ENCODE measurements at regions of chr19 and their contacts with region 1.

Region 1: GRCh38 chr19:35648017-35648961 is at the start of gene COX6B1:
- DNase-seq: peak; percentile 97
- H3K4me3 Mint-ChIP-seq: peak within 1 kb of the TSS; percentile 87
- H3K27ac Mint-ChIP-seq: peak within 1 kb of the TSS; percentile 91
- H3K4me1 Mint-ChIP-seq: peaks cover 40% of the 10 kb centered on the region
- H3K27me3 Mint-ChIP-seq: no peaks in the 10 kb centered on the region
- total RNA-seq, gene COX6B1: 499 to 512 TPM

Region 2: GRCh38 chr19:35612559-35613321 is 35.5 kb before region 1 on chr19 and contains the start of gene HAUS5:
- CTCF ChIA-PET with region 1: interaction called, 4 read pairs
- intact Hi-C with region 1: loop called (anchors 1 kb)
- DNase-seq: peak; percentile 96
- H3K4me3 Mint-ChIP-seq: peak within 1 kb of the TSS; percentile 86
- H3K27ac Mint-ChIP-seq: peak within 1 kb of the TSS; percentile 87
- H3K4me1 Mint-ChIP-seq: peaks cover 26% of the 10 kb centered on the region
- H3K27me3 Mint-ChIP-seq: no peaks in the 10 kb centered on the region
- total RNA-seq, gene HAUS5: 40.4 to 42.5 TPM

Region 3: DNA sequence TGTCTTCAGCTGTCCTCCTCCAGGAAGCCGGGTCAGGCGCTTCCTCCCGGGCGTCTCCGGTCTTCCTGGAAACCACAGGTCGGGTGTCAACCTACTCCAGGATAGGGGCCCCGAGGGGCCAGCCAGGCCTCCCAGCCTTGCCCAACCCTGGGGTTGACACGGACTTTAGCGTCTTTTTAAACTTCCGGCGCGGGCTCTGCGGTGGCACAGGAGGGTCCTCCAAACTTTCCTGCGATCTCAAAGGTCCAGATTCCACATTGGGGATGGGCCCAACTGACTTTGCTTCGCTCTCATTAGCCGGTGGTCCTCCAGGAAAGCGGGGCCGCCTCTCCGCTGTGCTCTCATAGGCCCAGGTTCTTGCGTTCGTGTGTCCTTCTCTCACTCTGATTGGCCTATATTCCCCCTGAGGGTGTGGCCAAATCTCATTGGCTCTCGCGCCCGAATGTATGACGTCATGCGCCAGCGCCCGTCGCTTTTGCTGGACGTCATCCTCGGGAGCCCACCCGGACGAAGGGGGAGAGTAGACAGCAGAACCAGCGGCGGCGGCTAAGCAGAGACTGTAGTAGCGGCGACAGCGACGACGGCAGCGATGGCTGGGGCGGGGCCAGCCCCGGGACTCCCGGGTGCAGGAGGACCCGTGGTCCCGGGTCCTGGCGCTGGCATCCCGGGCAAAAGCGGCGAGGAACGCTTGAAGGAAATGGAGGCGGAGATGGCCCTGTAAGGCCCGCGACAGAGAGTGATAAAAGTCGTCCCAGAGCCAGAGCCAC is 19.5 kb before region 1 on chr19 and contains the start of gene RBM42:
- CTCF ChIA-PET with region 1: no interaction called
- intact Hi-C with region 1: loop called (anchors 1 kb)
- DNase-seq: peak; percentile 97
- H3K4me3 Mint-ChIP-seq: peak within 1 kb of the TSS; percentile 100
- H3K27ac Mint-ChIP-seq: peak within 1 kb of the TSS; percentile 95
- H3K4me1 Mint-ChIP-seq: peaks cover 19% of the 10 kb centered on the region
- H3K27me3 Mint-ChIP-seq: no peaks in the 10 kb centered on the region
- total RNA-seq, gene RBM42: 64.2 to 66.2 TPM

Region 4: DNA sequence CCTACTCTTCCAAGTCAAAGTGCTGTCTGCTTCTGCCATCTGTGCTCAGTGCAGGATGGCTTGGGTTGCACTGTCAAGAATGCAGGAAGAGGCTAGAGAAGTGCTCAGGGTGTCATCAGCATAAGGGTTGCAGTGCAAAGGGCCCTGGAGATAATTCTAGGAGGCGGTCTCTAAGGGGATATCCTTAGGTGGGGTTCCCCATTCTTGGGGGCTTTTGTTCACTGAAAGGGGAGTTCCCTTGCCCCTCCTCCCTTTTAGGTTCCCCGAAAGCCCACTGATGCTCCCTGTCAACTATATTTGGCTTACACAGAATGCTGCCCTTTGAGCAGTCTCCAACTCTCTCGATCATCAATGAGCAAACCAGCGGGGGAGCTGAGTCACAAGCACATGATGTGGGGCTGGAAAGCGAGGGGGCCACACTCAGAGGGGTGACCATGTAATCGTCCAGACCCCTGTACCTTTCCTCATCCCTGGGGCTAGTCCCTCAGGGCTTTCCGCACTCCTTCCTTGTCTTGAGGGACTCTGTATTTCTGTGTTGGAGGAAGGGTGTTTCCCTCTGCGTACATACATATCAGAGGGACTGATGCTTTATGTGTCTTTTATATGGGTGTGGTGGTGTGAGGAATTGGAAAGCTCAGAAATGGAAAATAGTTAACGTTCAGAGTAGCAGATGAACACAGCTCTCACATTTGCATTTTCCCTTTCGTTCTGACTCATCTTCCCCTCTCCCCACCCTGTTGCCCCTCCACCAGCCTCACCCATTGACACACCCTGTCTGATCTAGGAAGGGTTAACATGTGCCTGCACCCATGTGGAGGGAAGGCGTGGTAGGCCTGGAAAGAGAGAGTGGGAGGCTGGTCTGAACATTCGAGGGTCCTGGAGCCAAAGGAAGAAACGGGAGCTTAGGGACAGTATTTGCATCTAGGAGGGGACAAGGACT is 62.8 kb after region 1 on chr19:
- CTCF ChIA-PET with region 1: no interaction called
- intact Hi-C with region 1: loop called (anchors 2 kb)
- DNase-seq: peak; percentile 87
- H3K4me3 Mint-ChIP-seq: peak overlapping the region; percentile 52
- H3K27ac Mint-ChIP-seq: peak overlapping the region; percentile 100
- H3K4me1 Mint-ChIP-seq: peaks cover 44% of the 10 kb centered on the region
- H3K27me3 Mint-ChIP-seq: no peaks in the 10 kb centered on the region

Region 5: GRCh38 chr19:35740423-35741202 is 92.3 kb after region 1 on chr19:
- CTCF ChIA-PET with region 1: no interaction called
- intact Hi-C with region 1: loop called (anchors 1 kb)
- DNase-seq: peak; percentile 99
- H3K4me3 Mint-ChIP-seq: peak overlapping the region; percentile 89
- H3K27ac Mint-ChIP-seq: peak overlapping the region; percentile 97
- H3K4me1 Mint-ChIP-seq: peaks cover 41% of the 10 kb centered on the region
- H3K27me3 Mint-ChIP-seq: no peaks in the 10 kb centered on the region

Region 6: DNA sequence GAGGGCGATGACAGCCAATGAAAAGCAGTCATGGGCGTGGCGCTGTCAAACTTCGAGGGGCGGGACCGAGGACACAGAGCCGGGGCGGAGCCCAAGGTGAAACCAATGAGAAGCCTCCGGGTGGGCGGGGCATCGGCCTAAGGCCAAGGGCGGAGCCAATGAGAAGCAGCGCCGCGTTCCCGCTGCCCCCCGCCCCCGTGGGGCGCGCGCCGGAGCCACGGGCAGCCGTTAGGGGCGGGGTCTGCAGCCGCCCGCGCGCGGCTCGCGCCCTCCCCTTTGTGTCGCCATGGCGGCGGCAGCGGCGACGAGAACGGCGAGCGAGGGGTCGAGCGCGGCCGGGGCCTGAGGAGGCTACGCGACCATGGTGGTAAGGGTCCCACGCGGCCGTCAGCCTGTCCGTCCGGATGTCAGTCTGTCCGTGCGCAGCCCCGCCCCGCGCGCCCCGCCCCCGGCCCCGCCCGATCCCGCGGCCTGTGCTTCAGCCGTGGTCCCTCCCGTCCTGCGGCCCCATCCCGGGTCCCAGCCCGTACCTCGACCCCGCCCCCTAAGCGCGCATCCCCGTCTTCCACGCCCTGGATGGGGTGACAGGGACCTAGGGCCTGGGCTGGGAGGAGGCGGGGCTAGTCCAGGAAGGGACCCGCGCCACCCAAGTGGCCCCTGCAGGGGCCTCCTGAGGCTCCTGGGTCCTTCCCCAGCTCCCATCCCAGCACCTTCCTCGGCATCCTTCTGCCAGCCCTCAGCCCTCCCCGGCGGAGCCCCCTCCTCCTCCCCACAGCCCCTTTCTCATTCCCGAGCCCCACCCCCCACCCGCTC is 127.2 kb after region 1 on chr19 and contains the start of gene ARHGAP33:
- CTCF ChIA-PET with region 1: no interaction called
- intact Hi-C with region 1: loop called (anchors 5 kb)
- DNase-seq: peak; percentile 100
- H3K4me3 Mint-ChIP-seq: peak within 1 kb of the TSS; percentile 78
- H3K27ac Mint-ChIP-seq: no peak within 1 kb of the TSS
- H3K4me1 Mint-ChIP-seq: peaks cover 18% of the 10 kb centered on the region
- H3K27me3 Mint-ChIP-seq: no peaks in the 10 kb centered on the region
- total RNA-seq, gene ARHGAP33: 49.5 to 61.6 TPM

Region 7: GRCh38 chr19:35786299-35787151 is 138.2 kb after region 1 on chr19:
- CTCF ChIA-PET with region 1: no interaction called
- intact Hi-C with region 1: no loop called
- DNase-seq: no peak
- H3K4me3 Mint-ChIP-seq: no peak overlapping the region
- H3K27ac Mint-ChIP-seq: no peak overlapping the region
- H3K4me1 Mint-ChIP-seq: no peaks in the 10 kb centered on the region
- H3K27me3 Mint-ChIP-seq: no peaks in the 10 kb centered on the region

Region 8: DNA sequence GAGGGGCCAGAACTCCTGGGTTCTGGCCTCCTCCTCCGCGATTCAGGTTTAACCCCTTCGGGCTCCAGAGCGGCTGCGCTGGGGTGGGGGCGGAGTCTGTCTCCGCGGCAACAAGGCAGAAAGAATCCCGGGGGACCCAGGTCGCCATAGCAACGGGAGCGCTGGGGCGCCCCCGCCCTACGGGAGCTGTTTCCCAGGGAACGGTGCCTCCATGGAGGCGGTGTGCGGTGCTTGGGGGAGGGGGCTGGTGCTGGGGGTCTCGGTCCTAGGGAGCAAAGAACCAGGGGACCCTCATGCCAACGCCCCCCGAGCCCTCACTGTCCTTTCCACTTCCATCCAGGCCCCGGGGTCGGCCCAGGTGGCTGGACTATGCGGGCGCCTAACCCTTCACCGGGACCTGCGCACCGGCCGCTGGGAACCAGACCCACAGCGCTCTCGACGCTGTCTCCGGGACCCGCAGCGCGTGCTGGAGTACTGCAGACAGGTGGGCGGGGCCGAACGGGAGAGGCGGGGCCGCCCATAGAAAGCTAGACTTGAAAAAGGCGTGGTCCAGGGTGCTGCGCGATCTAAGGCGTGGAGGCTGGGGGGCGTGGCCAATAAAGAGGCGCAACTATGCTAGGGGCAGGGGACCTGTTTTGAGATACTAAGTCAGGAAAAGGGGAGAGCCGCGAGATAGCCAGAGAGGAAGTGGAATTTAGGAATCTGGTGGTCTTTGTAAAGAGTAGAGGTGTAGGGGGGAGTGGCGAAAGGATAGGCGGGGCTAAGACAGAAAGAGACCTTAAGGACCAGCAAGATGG is 221.2 kb after region 1 on chr19:
- CTCF ChIA-PET with region 1: no interaction called
- intact Hi-C with region 1: loop called (anchors 2 kb)
- DNase-seq: peak; percentile 85
- H3K4me3 Mint-ChIP-seq: peak overlapping the region; percentile 77
- H3K27ac Mint-ChIP-seq: peak overlapping the region; percentile 67
- H3K4me1 Mint-ChIP-seq: peaks cover 16% of the 10 kb centered on the region
- H3K27me3 Mint-ChIP-seq: peaks cover 46% of the 10 kb centered on the region